Gastrocnemius medialis (tissue), 4 donors: ENCODE measurements at regions of chr2 and their contacts with region 1.

Region 1: GRCh38 chr2:26255759-26256384 is 11.1 kb downstream of the HADHB start:
- DNase-seq: peak in 1 of 2 donors; percentile 17
- ATAC-seq: no peak
- H3K4me3 ChIP-seq: no peak overlapping the region
- H3K27ac ChIP-seq: peak overlapping the region; percentile 95 to 98 (median 97)
- H3K4me1 ChIP-seq: peaks cover 57 to 76% of the 10 kb centered on the region in 2 donors
- H3K27me3 ChIP-seq: no peaks in the 10 kb centered on the region
- CTCF ChIP-seq: no peak
- POLR2A ChIP-seq: peak in 1 of 2 donors; percentile 18

Region 2: DNA sequence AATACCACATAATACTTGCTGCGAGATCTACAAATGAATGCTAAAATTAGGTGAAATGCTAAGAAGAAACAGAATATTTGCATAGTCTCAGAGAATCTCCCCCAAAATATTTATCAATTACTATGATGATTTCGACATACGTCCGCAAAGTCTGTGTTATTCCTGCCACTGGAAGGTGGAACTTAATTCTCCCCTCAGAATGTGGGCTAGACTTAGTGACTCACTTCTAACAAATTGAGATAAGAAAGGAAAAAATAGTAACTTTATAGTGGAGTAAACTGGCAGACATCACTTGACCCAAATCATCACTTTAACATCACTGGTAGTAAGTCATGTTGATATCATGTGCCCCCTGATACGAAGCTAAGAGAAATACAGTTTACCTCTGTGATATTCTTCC is 12.3 kb after region 1 on chr2:
- in situ Hi-C with region 1: no loop called
- intact Hi-C with region 1: loop called (anchors 1 kb)
- DNase-seq: no peak
- ATAC-seq: no peak
- H3K4me3 ChIP-seq: no peak overlapping the region
- H3K27ac ChIP-seq: peak overlapping the region; percentile 35 to 84 (median 82)
- H3K4me1 ChIP-seq: peaks cover 10% of the 10 kb centered on the region in 2 donors
- H3K27me3 ChIP-seq: no peaks in the 10 kb centered on the region
- CTCF ChIP-seq: no peak
- POLR2A ChIP-seq: no peak

Region 3: GRCh38 chr2:26292665-26293064 is 36.8 kb after region 1 on chr2:
- in situ Hi-C with region 1: no loop called
- intact Hi-C with region 1: no loop called
- DNase-seq: no peak
- ATAC-seq: no peak
- H3K4me3 ChIP-seq: no peak overlapping the region
- H3K27ac ChIP-seq: no peak overlapping the region
- H3K4me1 ChIP-seq: no peaks in the 10 kb centered on the region
- H3K27me3 ChIP-seq: no peaks in the 10 kb centered on the region
- CTCF ChIP-seq: no peak
- POLR2A ChIP-seq: no peak

Region 4: DNA sequence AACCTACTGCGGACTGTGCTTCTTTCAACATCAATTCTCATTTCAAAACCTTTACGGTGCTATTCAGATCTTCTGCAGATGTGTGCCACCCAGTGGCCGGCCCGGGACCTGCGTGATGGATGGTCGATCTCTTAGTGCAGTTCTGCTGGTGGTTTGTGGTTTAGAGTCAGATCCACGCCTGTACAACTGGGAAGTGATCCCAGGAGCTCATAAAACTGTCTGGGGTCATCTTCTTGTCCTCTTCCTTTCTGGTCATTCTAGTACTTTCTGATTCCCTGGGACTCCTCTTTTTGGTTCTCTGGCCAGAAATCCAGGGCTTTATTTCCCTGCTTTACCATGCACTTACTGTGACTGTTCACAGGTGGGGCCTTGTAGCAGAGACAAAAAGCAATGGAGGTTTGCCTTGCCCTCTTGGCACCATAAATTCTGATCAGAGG is 74.3 kb after region 1 on chr2:
- in situ Hi-C with region 1: no loop called
- intact Hi-C with region 1: no loop called
- DNase-seq: peak; percentile 65 to 84
- ATAC-seq: peak; percentile 88 to 99
- H3K4me3 ChIP-seq: no peak overlapping the region
- H3K27ac ChIP-seq: no peak overlapping the region
- H3K4me1 ChIP-seq: no peaks in the 10 kb centered on the region
- H3K27me3 ChIP-seq: no peaks in the 10 kb centered on the region
- CTCF ChIP-seq: peak; percentile 71 to 92 (median 85)
- POLR2A ChIP-seq: no peak

Region 5: DNA sequence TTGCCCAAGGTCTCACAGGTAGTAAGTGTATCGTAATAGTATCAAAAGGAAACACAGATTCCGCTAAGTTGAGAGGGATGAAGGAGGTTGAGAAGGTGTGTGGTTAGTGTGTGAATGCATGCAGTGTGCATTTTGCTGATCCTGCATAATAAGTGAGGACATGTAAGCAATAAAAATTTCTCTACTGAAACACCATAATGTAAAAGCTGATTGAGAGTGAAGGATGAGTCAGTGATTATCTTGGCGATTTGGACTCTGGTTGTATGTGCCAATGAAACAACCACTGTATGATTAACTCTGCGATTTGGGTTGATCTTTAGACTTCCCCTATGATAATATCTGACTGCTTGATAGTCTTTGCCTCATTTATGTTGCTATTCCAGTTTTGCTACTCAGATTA is 107.5 kb after region 1 on chr2:
- in situ Hi-C with region 1: no loop called
- intact Hi-C with region 1: no loop called
- DNase-seq: no peak
- ATAC-seq: no peak
- H3K4me3 ChIP-seq: no peak overlapping the region
- H3K27ac ChIP-seq: no peak overlapping the region
- H3K4me1 ChIP-seq: peaks cover 15 to 17% of the 10 kb centered on the region in 2 donors
- H3K27me3 ChIP-seq: no peaks in the 10 kb centered on the region
- CTCF ChIP-seq: no peak
- POLR2A ChIP-seq: no peak